Endothelial cell of umbilical vein (primary cell): ENCODE measurements at regions of chr16 and their contacts with region 1.

Region 1: DNA sequence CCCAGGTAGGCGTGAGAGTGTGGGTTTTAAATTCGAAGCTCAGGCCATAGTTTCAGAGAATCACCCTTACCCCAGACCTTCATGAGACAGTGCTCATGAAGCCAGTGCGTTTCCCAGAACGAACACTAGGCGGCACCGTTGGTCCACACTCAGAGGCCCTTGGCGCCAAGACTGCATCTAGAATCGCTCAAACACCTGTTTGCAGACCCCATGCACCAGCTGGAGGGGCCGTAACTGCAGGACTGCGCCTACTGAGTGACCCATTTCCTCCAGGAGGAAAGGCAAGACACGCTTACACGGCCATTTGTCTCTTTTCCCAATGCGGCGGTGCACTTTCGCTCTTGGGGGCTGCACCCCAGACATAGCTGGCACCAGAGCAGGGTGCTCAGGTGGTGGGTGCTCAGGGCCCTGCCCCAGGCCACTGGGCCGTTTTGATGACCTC is 34.0 kb downstream of the ADGRG5 start:
- DNase-seq: peak; percentile 68
- H3K4me3 ChIP-seq: no peak overlapping the region
- H3K27ac ChIP-seq: no peak overlapping the region
- H3K4me1 ChIP-seq: no peaks in the 10 kb centered on the region
- H3K27me3 ChIP-seq: no peaks in the 10 kb centered on the region
- CTCF ChIP-seq: peak; percentile 96 to 99
- POLR2A ChIP-seq: no peak

Region 2: DNA sequence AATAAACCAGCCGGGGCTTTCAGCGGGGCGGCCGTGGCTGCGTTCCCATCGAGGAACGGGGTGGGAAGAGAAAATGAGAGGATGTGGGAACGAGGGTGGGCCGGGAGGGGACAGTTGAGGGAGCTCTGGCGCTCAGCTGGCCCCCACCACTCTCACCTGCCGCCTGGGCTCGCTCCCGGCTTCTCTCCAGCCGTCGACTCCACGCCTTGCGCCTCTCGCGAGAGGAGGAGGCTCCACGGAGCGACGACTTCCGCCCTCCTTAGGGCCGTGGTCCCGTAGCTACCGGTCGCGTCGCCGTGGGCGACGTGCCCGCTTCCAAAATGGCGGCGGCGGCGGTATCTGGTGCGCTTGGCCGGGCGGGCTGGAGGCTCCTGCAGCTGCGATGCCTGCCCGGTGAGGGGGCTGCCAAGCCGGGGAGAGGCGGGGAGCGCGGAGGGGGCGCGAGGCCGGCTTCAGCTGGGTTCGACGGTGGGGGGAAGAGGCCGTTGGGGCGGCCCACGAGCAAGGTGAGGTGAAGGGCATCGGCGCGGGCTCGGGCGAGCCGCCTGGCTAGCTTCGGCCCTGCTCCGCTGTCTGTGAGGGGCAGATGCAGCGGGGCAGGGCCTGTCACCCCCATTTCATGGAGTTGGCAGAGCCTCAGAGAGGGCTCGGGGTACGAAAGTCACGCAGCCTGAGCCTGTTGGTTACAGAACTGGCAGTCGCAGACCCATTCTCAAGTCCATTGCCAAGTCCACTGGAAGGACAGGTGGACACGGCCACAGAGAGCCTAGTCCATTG is 129.1 kb before region 1 on chr16 and contains the starts of genes CIAPIN1 and COQ9:
- CTCF ChIA-PET with region 1: no interaction called
- POLR2A ChIA-PET with region 1: no interaction called
- dilution Hi-C with region 1: no loop called
- intact Hi-C with region 1: no loop called
- DNase-seq: peak; percentile 92
- H3K4me3 ChIP-seq: peak within 1 kb of the TSS; percentile 43 to 93 (median 78)
- H3K27ac ChIP-seq: peak within 1 kb of the TSS; percentile 56
- H3K4me1 ChIP-seq: peaks cover 12% of the 10 kb centered on the region
- H3K27me3 ChIP-seq: no peaks in the 10 kb centered on the region
- CTCF ChIP-seq: no peak
- POLR2A ChIP-seq: peak; percentile 94
- total RNA-seq, gene CIAPIN1: 70.9 and 77.9 TPM in 2 replicates
- total RNA-seq, gene COQ9: 42.1 and 42.5 TPM in 2 replicates

Region 3: GRCh38 chr16:57711346-57712026 is 135.0 kb after region 1 on chr16:
- CTCF ChIA-PET with region 1: interaction called, 17 read pairs
- POLR2A ChIA-PET with region 1: no interaction called
- dilution Hi-C with region 1: no loop called
- intact Hi-C with region 1: no loop called
- DNase-seq: no peak
- H3K4me3 ChIP-seq: no peak overlapping the region
- H3K27ac ChIP-seq: no peak overlapping the region
- H3K4me1 ChIP-seq: no peaks in the 10 kb centered on the region
- H3K27me3 ChIP-seq: peaks cover 20 to 34% of the 10 kb centered on the region in 2 experiments
- CTCF ChIP-seq: no peak
- POLR2A ChIP-seq: no peak

Region 4: GRCh38 chr16:57734925-57735754 is 158.7 kb after region 1 on chr16:
- CTCF ChIA-PET with region 1: interaction called, 13 read pairs
- POLR2A ChIA-PET with region 1: no interaction called
- dilution Hi-C with region 1: no loop called
- intact Hi-C with region 1: loop called (anchors 1 kb)
- DNase-seq: peak; percentile 100
- H3K4me3 ChIP-seq: peak overlapping the region; percentile 72 to 93 (median 74)
- H3K27ac ChIP-seq: peak overlapping the region; percentile 81
- H3K4me1 ChIP-seq: peaks cover 19% of the 10 kb centered on the region
- H3K27me3 ChIP-seq: no peaks in the 10 kb centered on the region
- CTCF ChIP-seq: no peak
- POLR2A ChIP-seq: peak; percentile 58

Region 5: DNA sequence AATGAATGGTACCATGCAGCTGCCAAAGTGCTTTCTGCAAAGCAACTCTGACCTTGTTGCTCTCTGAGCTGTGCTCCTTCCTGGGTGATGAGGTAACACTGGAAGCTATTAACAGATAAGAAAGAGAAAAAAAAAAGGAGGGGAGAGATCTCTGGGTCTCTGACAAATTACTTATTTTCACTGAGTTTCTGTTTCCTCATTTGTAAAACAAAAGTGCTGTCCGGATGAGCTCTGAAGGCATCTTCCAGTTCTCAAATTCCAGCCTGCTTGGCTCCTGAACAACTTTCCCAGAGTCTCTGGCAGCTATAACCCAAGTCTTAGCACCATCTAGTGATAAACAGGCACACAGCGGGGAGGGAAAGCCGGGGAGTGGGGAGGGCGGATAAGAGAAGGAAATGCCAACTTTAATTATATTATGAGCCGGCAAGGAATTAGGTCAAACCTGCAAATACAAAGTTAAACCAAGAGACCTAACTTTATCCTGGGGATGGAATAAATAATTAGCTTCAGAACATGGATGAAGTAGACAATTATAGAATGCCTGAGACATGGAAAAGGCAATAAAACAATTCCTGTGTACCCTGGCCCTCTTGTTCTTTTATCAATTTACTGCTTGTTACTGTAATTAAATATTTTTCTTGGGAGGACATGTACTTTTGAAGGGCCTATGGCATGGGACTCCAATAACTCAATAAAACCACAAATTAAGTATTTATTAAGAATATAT is 287.1 kb after region 1 on chr16:
- CTCF ChIA-PET with region 1: interaction called, 25 read pairs
- POLR2A ChIA-PET with region 1: no interaction called
- dilution Hi-C with region 1: no loop called
- intact Hi-C with region 1: loop called (anchors 1 kb)
- DNase-seq: peak; percentile 76
- H3K4me3 ChIP-seq: no peak overlapping the region
- H3K27ac ChIP-seq: no peak overlapping the region
- H3K4me1 ChIP-seq: peaks cover 5% of the 10 kb centered on the region
- H3K27me3 ChIP-seq: peaks cover 0 to 2% of the 10 kb centered on the region in 2 experiments
- CTCF ChIP-seq: peak; percentile 37 to 56
- POLR2A ChIP-seq: no peak